Breast epithelium (tissue), 4 donors: ENCODE measurements at regions of chr4 and their contacts with region 1.

Region 1: DNA sequence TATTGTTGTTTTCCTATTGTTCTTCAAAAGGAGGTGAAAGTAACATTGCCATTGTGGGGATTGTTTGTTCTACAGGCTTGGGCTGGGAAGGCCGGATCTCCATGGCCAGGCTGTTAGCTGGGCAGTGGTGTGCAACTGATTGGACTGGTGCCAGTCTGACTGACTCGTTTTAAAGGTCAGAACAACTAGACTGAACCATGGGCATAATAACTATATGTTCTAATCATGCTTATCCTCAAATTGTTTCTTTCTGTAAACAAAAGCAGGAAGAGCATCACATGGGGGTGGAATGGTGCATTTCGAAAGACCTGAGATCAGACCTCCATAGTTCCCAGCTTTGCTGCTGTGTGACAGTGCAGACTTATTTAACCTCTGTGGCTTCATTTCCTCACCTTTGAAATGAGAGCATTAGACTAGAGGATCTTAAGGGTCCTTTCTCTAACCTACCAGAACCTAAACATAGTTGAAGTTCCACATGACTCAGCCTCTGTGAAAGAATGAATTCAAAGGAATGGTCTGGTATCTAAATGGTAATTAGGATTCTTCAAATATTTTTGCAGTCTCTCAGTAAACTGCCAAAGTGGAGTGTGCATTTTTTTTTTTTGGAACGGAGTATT is 66.7 kb upstream of the PGRMC2 start:
- DNase-seq: no peak
- H3K4me3 ChIP-seq: no peak overlapping the region
- H3K27ac ChIP-seq: no peak overlapping the region
- H3K4me1 ChIP-seq: no peaks in the 10 kb centered on the region
- H3K27me3 ChIP-seq: no peaks in the 10 kb centered on the region
- CTCF ChIP-seq: no peak
- POLR2A ChIP-seq: no peak

Region 2: GRCh38 chr4:128410037-128410436 is 55.7 kb after region 1 on chr4:
- intact Hi-C with region 1: loop called (anchors 2 kb)
- DNase-seq: no peak
- H3K4me3 ChIP-seq: no peak overlapping the region
- H3K27ac ChIP-seq: no peak overlapping the region
- H3K4me1 ChIP-seq: no peaks in the 10 kb centered on the region
- H3K27me3 ChIP-seq: no peaks in the 10 kb centered on the region
- CTCF ChIP-seq: no peak
- POLR2A ChIP-seq: no peak

Region 3: DNA sequence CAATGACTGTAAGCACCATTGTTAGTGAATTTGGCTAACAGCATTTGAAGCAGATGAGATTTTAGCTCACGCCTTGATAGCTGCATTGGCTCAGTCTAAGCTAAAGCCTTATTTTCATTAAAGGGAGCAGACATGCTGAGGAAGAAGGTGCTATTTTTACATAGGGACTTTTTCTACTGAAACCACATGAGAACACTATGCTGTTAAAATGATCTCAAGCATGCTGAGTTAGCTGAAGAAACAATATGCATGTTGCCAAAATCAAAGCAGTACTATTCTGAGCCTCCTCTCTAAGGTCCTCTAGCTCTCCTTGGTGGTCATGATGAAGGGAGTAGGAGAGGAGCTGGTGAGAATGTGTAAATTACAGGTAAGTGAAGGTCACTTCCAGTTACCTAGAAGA is 320.8 kb after region 1 on chr4:
- intact Hi-C with region 1: no loop called
- DNase-seq: no peak
- H3K4me3 ChIP-seq: no peak overlapping the region
- H3K27ac ChIP-seq: no peak overlapping the region
- H3K4me1 ChIP-seq: no peaks in the 10 kb centered on the region
- H3K27me3 ChIP-seq: no peaks in the 10 kb centered on the region
- CTCF ChIP-seq: no peak
- POLR2A ChIP-seq: no peak